ENCODE measurements at regions of chr3 and their contacts with region 1.

Region 1: DNA sequence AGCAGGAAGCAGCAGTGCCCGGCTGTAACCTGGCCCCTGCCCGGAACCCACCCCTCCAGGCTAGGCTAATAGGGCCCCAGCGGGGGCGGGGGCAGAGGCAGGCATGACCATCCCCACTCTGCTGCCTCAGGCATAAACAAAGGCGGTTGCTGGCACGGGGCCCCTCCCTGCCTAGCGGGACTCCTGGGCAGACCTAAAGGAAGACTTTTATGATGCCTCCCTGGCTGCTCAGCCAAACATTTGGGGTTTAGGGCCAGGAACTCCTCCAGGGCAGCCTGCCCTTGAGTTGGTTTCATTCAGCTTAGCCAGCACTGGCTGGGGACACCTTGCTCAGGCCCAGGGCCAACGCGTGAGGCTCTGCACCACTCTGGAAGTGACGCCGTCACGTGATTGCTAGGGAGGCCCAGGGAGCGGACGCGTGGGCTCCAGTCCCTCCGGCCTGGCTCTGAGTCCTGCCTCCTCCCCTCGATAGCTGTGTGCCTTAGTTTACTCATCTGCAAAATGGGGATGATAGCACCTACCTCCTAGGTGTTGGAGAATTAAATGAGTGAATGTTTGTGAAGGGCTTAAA is 27.7 kb downstream of the HDAC11 start:
- DNase-seq: peak in 3 of 5 donors; percentile 30 to 56 (median 45)
- H3K4me3 ChIP-seq: no peak overlapping the region
- H3K27ac ChIP-seq: no peak overlapping the region
- H3K4me1 ChIP-seq: peaks cover 7% of the 10 kb centered on the region
- H3K27me3 ChIP-seq: no peaks in the 10 kb centered on the region
- CTCF ChIP-seq: no peak
- EP300 ChIP-seq: no peak
- POLR2A ChIP-seq: no peak

Region 2: DNA sequence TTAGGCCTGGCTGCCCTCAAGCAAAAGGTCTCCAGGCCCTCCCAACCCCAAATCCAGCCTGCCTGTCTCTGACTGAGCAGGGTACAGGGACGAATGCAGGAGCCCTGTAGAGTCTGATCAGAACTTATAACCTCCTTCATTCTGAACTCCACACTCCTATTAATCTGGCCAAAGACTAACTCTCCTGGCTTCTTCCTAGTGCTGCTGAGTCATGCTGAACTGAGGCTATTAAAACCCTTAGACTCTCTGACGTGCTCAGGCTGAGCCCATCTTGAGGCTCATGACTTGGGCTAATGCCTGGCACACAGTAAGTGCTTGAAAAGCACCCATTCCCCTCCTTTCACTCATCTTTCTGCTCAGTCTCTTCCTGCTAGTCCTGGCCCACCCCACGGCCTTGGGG is 169.6 kb before region 1 on chr3:
- intact Hi-C with region 1: no loop called
- DNase-seq: no peak
- H3K4me3 ChIP-seq: no peak overlapping the region
- H3K27ac ChIP-seq: no peak overlapping the region
- H3K4me1 ChIP-seq: no peaks in the 10 kb centered on the region
- H3K27me3 ChIP-seq: no peaks in the 10 kb centered on the region
- CTCF ChIP-seq: no peak
- EP300 ChIP-seq: no peak
- POLR2A ChIP-seq: no peak

Region 3: DNA sequence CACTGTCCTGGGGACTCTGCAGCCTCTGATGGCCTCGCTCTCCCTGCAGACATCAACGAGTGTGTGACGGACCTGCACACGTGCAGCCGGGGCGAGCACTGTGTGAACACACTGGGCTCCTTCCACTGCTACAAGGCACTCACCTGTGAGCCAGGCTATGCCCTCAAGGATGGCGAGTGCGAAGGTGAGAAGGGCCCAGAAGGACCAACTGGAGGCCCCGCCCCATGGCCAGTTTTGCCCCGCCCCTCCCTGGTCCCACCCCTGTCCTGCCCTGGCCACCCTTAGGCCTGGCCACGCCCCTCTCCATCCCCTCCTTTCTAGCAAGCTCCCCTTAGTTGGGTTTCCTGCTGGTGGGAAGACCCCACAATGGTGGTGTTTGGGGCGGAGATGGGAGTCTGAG is 118.5 kb after region 1 on chr3:
- intact Hi-C with region 1: loop called in 1 of 4 experiments (anchors 5 kb)
- DNase-seq: no peak
- H3K4me3 ChIP-seq: no peak overlapping the region
- H3K27ac ChIP-seq: no peak overlapping the region
- H3K4me1 ChIP-seq: no peaks in the 10 kb centered on the region
- H3K27me3 ChIP-seq: no peaks in the 10 kb centered on the region
- CTCF ChIP-seq: no peak
- EP300 ChIP-seq: no peak
- POLR2A ChIP-seq: no peak

Measured in ovary (tissue), 10 donors.